ENCODE measurements at regions of chr17 and their contacts with region 1.

Region 1: DNA sequence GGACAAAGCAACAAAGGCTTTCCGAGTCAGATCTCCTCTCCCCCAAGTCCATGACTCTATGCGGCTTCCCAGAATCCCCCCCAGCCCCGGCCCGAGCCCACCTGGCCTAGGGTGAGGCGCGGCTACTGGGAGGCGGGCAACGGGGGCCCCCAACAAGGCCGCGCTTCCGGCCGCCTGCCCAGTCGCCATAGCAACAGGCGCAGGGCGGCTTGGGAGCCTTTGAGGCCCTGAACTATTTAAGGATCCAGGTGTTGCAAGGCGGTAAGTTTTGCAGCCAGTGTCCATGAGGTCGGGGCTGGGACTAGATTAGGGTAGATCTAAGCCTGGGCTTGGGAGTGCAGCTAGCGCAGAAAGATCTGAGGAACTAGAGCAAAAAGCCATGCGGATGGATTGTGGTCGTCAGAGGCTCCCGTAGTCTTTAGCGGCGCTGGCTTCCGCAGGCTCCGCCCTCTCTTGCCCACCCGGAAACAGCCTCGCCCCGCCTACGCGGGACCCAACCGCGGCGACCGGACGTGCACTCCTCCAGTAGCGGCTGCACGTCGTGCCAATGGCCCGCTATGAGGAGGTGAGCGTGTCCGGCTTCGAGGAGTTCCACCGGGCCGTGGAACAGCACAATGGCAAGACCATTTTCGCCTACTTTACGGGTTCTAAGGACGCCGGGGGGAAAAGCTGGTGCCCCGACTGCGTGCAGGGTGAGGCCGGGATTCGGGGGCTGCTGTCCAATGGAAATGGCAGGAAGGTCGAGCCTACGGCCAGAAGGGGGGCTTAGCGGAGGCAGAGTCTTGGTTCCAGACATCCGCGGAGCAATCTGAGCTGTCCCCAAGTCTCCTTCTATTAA is at the starts of genes KIAA0753 and TXNDC17:
- DNase-seq: peak; percentile 84 to 98 (median 90)

Region 2: GRCh38 chr17:6313835-6314234 is 326.9 kb before region 1 on chr17:
- intact Hi-C with region 1: no loop called
- DNase-seq: no peak

Region 3: GRCh38 chr17:6473128-6473767 is 167.5 kb before region 1 on chr17:
- intact Hi-C with region 1: loop called (anchors 10 kb)
- DNase-seq: peak; percentile 59 to 97 (median 85)